A673 (cell line): ENCODE measurements at regions of chr9 and their contacts with region 1.

Region 1: DNA sequence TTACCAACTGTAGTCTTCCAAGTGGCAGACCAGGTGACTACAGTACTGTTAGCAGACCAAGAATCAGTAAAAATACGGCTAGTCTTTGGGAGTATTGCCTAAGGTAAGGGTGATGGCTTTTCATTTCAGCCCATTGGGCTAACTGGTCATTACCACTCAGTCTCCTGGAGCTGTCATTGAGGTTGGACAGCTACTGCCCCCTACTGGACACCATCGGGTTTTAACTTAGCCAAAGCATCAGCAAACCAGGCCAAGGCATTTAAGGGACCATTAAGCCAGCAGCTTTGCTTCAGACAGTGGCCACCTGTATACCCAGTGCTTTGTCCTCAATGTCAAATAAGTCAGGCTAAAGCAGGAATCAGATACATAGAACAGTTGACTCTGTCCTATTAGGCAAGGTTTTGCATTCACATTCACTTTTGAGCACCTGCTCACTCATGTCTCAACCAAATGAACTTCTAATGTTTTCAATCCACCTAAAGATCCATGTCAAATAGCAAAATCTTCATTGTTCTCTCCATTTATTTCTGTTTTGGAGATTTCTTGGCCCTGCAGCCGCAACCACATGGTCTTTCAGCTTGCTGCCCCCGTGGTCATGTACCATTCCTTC is 117.2 kb downstream of the INVS start:
- DNase-seq: peak; percentile 75
- H3K4me3 ChIP-seq: no peak overlapping the region
- H3K27ac ChIP-seq: no peak overlapping the region
- H3K4me1 ChIP-seq: no peaks in the 10 kb centered on the region
- H3K27me3 ChIP-seq: no peaks in the 10 kb centered on the region
- CTCF ChIP-seq: peak; percentile 83

Region 2: DNA sequence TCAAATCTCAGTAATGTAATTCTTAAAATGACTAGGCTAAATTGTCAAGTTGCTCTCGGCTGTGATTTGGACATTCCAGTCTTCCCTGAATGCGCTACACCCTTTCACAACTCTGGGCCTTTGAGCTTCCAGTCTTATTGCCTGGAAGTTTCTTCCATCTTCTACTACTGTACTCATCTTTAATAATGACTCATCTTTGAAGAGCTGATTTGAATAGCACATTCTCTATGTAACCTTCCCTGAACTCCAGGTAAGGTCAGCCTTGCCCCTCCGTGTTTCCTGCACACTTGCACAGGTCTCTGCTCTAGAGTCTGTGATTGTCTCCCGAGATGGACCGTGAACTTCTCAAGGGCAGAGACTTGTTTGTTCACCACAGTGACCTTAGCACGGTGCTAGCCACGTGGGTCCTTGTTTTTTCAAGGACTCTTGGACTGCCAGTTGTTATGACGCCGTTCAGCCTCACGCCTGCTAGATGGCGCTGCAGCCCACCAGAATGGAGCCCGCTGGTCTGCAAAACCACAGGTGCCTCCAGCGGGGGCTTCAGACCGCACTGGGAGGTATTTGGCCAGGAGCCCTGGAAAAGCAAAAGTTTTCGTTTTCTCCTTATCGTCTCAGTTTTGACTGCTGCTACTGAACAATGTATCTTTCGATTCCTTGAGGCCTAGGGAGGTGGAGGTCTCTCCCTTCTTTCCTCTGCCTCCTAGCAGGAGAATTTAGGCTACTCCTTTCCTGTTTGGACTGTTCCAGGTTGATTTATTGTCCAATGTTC is 949.8 kb before region 1 on chr9:
- CTCF ChIA-PET with region 1: no interaction called
- POLR2A ChIA-PET with region 1: no interaction called
- intact Hi-C with region 1: loop called (anchors 10 kb)
- DNase-seq: peak; percentile 85
- H3K4me3 ChIP-seq: no peak overlapping the region
- H3K27ac ChIP-seq: no peak overlapping the region
- H3K4me1 ChIP-seq: peaks cover 14% of the 10 kb centered on the region
- H3K27me3 ChIP-seq: no peaks in the 10 kb centered on the region
- CTCF ChIP-seq: peak; percentile 94

Region 3: DNA sequence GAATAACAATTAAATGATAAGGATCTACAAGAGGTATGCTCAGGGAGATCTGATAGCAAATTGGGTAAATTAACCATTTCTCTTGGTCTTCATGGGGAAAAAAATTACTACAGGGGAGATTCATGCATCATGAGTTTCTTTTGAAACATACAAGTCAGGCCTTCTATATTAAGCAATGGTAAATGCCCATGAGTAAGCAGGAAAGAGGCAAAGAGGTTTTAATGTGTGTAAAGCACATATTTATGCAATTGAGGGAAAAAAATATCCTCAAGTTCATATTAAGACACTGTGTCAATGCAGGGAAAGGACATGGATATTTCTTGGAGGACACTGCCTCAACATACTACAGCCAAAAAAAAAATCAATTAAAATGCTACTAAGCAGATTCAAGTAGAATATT is 468.0 kb before region 1 on chr9:
- CTCF ChIA-PET with region 1: interaction called, 11 read pairs
- POLR2A ChIA-PET with region 1: no interaction called
- intact Hi-C with region 1: no loop called
- DNase-seq: no peak
- H3K4me3 ChIP-seq: no peak overlapping the region
- H3K27ac ChIP-seq: no peak overlapping the region
- H3K4me1 ChIP-seq: no peaks in the 10 kb centered on the region
- H3K27me3 ChIP-seq: no peaks in the 10 kb centered on the region
- CTCF ChIP-seq: no peak

Region 4: GRCh38 chr9:99807276-99807852 is 408.9 kb before region 1 on chr9:
- CTCF ChIA-PET with region 1: no interaction called
- POLR2A ChIA-PET with region 1: no interaction called
- intact Hi-C with region 1: loop called (anchors 5 kb)
- DNase-seq: peak; percentile 82
- H3K4me3 ChIP-seq: no peak overlapping the region
- H3K27ac ChIP-seq: no peak overlapping the region
- H3K4me1 ChIP-seq: peaks cover 24% of the 10 kb centered on the region
- H3K27me3 ChIP-seq: no peaks in the 10 kb centered on the region
- CTCF ChIP-seq: peak; percentile 89

Region 5: DNA sequence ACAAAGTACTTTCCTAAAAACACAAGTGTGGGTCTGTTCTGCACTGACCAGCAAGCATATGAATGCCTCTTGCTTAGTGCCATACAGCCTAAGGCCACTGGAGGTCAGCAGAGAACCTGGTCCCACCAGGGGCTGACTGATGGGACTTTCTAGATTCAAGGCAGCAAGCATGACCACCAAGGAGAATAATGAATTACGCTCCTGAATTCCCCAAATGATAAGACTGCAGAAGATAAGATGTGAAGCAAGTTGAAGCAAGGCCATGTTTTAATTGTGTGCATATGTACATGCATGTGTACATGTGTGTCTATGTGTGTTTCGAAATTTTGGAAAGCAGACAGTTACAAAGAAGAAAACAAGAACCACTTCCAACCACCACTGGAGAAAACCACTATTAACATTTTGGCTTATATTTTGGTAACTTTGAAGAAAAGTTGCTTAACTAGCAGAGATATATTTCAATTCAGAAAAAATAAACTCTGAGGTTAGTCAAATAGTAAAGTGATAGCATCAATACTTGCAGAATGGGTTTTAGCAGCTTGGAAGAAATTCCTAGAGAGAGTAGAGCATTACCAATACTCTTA is 188.0 kb before region 1 on chr9:
- CTCF ChIA-PET with region 1: no interaction called
- POLR2A ChIA-PET with region 1: no interaction called
- intact Hi-C with region 1: loop called (anchors 1 kb)
- DNase-seq: peak; percentile 81
- H3K4me3 ChIP-seq: no peak overlapping the region
- H3K27ac ChIP-seq: no peak overlapping the region
- H3K4me1 ChIP-seq: peaks cover 20% of the 10 kb centered on the region
- H3K27me3 ChIP-seq: no peaks in the 10 kb centered on the region
- CTCF ChIP-seq: peak; percentile 94